ENCODE measurements at regions of chr12 and their contacts with region 1.

Region 1: GRCh38 chr12:26629864-26630263 is 203.1 kb downstream of the ITPR2 start:
- DNase-seq: no peak
- H3K4me3 ChIP-seq: peak overlapping the region in 1 of 2 donors; percentile 2
- H3K27ac ChIP-seq: no peak overlapping the region
- H3K4me1 ChIP-seq: no peaks in the 10 kb centered on the region
- H3K27me3 ChIP-seq: no peaks in the 10 kb centered on the region
- CTCF ChIP-seq: peak in 2 of 3 experiments; percentile 23 to 46

Region 2: DNA sequence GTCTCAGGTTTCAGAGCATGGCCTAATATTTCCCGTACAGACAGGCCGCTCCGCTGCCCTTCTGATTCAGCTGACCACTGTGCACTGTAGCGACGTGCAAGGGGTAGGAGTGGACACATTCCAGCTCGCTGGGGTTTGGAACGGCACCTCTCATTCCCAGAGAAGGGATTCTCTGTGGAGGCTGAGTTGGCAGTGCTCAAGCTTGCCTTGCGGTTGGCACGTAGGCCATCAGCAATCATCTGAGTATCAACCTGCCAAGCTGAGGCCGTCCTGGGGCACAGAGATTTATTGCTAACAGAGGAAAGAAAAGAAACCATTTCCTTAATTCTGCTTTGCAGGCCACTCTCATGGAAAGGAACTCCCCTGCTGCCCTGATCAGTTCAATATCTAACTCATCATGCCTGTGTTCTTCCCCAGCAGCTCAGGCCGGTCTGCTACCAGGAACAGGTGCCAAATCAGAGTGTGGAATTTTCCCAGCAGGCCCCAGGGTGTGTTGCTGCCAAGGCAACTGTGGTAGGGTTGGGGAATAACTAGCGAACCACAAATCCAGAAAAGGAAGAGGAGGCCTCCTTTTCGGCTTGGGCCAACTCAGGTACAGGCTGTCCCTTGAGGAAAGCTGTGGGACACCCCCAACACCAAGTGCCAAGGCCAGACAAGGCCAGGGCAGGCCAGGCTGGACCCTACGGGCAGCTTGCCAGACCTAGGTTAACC is 342.0 kb before region 1 on chr12:
- intact Hi-C with region 1: no loop called
- DNase-seq: peak in 1 of 2 donors; percentile 77
- H3K4me3 ChIP-seq: peak overlapping the region in 1 of 2 donors; percentile 17
- H3K27ac ChIP-seq: peak overlapping the region; percentile 87 to 93
- H3K4me1 ChIP-seq: peaks cover 7 to 15% of the 10 kb centered on the region in 2 donors
- H3K27me3 ChIP-seq: no peaks in the 10 kb centered on the region
- CTCF ChIP-seq: no peak

Region 3: GRCh38 chr12:26701604-26702215 is 71.8 kb after region 1 on chr12:
- intact Hi-C with region 1: loop called (anchors 5 kb)
- DNase-seq: no peak
- H3K4me3 ChIP-seq: no peak overlapping the region
- H3K27ac ChIP-seq: no peak overlapping the region
- H3K4me1 ChIP-seq: peaks cover 0 to 11% of the 10 kb centered on the region in 2 donors
- H3K27me3 ChIP-seq: no peaks in the 10 kb centered on the region
- CTCF ChIP-seq: peak; percentile 44 to 59 (median 45)

Region 4: DNA sequence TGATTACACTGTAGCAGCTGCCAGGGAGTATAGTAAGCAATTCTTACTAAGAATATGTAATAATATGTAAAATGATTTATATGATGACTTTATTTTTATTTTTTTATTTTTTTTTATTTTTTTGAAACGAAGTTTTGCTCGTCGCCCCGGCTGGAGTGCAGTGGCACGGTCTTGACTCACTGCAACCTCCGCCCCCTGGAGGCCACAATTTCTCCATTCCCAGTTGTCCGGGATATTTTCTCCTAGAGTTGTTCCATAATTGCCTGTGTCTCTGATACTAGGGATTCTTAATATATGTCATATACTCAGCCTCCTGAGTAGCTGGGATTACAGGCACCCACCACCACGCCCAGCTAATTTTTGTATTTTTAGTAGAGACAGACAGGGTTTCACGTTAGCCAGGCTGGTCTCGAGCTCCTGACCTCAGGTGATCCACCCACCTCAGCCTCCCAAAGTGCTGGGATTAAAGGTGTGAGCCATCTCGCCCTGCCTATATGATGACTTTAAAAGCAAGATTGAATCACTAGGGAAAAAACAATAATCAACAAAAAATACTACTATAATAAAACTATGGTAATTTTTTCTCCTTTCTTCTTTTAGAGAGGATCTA is 215.3 kb after region 1 on chr12:
- intact Hi-C with region 1: loop called (anchors 10 kb)
- DNase-seq: peak in 1 of 2 donors; percentile 74
- H3K4me3 ChIP-seq: no peak overlapping the region
- H3K27ac ChIP-seq: no peak overlapping the region
- H3K4me1 ChIP-seq: peaks cover 0 to 8% of the 10 kb centered on the region in 2 donors
- H3K27me3 ChIP-seq: no peaks in the 10 kb centered on the region
- CTCF ChIP-seq: peak; percentile 20 to 62 (median 59)

Region 5: DNA sequence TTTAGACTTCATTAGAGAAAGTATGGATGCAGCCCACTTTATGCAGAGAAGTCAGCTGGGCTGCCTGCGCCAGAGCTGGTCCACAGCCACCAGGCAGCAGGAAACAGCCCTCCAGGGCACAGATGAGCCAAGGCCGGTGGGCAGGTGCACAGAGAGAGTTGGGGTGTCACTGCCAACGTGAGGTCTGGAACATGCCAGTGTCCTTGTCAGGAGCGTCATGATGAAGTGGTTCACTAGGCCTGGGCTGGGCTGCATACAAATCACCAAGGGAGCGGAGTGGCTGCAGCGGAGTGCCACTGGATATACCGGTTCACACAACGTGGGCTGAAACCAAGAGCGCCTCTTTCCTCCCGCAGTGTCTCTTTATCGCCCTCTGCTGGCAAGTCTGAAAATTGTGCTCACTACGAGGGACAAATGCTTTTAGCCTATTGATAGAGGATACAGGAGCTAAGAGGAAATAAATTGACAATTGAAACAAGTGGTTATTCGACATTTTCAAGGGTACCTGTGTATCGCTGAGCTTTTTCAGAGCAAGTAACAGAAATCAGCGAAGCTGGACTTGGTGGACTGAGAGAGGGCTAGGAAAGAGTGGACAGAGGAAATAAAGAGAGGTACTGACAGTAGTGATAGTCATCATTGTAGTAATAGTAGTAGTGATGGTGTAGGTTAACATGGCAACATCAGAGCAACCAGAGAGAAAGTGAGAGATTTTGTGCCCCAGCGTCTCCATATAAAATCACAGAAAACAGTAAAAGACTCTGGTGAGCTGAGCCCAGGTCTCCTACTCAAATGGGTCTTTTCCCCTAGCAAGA is 255.1 kb after region 1 on chr12:
- intact Hi-C with region 1: loop called (anchors 2 kb)
- DNase-seq: peak; percentile 37 to 91
- H3K4me3 ChIP-seq: no peak overlapping the region
- H3K27ac ChIP-seq: no peak overlapping the region
- H3K4me1 ChIP-seq: no peaks in the 10 kb centered on the region
- H3K27me3 ChIP-seq: no peaks in the 10 kb centered on the region
- CTCF ChIP-seq: peak; percentile 80 to 91 (median 91)

Measured in ascending aorta (tissue), 2 donors.